Naive thymus-derived CD4-positive, alpha-beta T cell (primary cell): ENCODE measurements at regions of chr9 and their contacts with region 1.

Region 1: DNA sequence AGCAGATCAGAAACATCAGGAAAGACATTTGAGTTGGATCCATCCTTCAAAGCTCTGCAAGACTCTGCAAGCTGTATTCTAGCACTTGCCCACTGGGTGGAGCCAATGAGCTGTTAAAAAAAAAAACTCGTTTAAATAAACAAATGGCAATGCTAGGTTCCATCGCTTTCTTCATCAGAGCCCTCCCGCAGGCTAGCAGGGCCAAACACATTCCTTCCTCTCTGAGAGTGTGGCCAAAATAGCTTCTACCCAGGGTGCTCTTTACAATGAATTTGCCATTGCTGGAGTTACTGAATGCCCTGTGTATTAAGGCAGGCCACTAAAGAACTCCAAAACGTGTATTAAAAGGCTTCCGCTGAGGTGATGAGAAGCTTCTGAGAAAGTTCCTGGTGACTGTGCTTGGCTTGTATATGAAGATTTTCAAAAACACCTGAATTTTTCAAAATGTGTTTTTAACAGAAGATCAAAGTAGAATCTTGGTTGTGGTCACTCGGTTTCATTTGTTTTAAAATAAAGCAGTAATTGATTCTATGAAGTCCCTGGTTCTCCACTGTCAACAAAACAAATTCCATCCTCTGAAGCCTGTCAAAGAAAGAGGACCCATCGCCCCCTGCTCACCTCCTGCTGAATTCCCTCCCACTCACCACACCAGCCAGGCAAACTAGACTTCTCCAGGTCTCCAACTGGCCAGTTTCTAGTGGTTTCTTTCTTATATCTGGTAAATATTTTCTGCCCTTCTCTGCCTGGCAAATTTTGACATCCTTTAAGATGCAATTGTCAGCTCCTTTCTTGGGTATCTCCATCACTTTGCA is 36.5 kb upstream of the EQTN start:
- DNase-seq: peak in 7 of 9 donors; percentile 42 to 67 (median 58)
- ATAC-seq: peak; percentile 73
- H3K4me3 ChIP-seq: no peak overlapping the region
- H3K4me3 Mint-ChIP-seq: no peak overlapping the region
- H3K27ac ChIP-seq: no peak overlapping the region
- H3K27ac Mint-ChIP-seq: no peak overlapping the region
- H3K4me1 ChIP-seq: no peaks in the 10 kb centered on the region
- H3K4me1 Mint-ChIP-seq: peaks cover 0 to 12% (median 0%) of the 10 kb centered on the region in 7 donors
- H3K27me3 ChIP-seq: no peaks in the 10 kb centered on the region
- H3K27me3 Mint-ChIP-seq: peaks cover 0 to 4% (median 0%) of the 10 kb centered on the region in 5 donors

Region 2: GRCh38 chr9:26850995-26851394 is 482.5 kb before region 1 on chr9:
- CTCF ChIA-PET with region 1: no interaction called
- POLR2A ChIA-PET with region 1: no interaction called
- intact Hi-C with region 1: no loop called
- DNase-seq: no peak
- ATAC-seq: no peak
- H3K4me3 ChIP-seq: no peak overlapping the region
- H3K4me3 Mint-ChIP-seq: no peak overlapping the region
- H3K27ac ChIP-seq: no peak overlapping the region
- H3K27ac Mint-ChIP-seq: no peak overlapping the region
- H3K4me1 ChIP-seq: no peaks in the 10 kb centered on the region
- H3K4me1 Mint-ChIP-seq: peaks cover 0 to 4% (median 0%) of the 10 kb centered on the region in 7 donors
- H3K27me3 ChIP-seq: no peaks in the 10 kb centered on the region
- H3K27me3 Mint-ChIP-seq: no peaks in the 10 kb centered on the region

Region 3: DNA sequence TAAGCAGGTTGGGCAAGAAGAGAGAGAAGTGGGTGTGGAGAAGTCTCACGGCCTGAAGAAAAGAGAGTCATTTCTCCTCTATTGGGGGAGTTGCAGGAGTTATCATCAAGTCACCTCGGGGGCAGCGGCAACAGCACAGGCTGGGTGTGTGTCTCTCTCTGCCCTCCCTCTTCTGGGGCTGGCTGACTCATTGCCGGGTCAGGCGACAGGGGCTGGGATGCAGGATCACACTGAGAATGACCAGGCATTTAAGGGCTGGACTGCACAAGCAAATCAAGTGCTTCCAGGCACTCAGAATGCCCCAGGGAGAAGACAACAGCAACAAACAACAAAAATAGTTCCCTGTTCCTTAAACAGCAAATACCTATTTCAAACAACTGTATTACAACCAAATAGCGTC is 30.2 kb before region 1 on chr9:
- CTCF ChIA-PET with region 1: no interaction called
- POLR2A ChIA-PET with region 1: no interaction called
- intact Hi-C with region 1: no loop called
- DNase-seq: no peak
- ATAC-seq: no peak
- H3K4me3 ChIP-seq: no peak overlapping the region
- H3K4me3 Mint-ChIP-seq: no peak overlapping the region
- H3K27ac ChIP-seq: no peak overlapping the region
- H3K27ac Mint-ChIP-seq: no peak overlapping the region
- H3K4me1 ChIP-seq: no peaks in the 10 kb centered on the region
- H3K4me1 Mint-ChIP-seq: peaks cover 0 to 1% (median 0%) of the 10 kb centered on the region in 7 donors
- H3K27me3 ChIP-seq: no peaks in the 10 kb centered on the region
- H3K27me3 Mint-ChIP-seq: peaks cover 0 to 11% (median 8%) of the 10 kb centered on the region in 5 donors

Region 4: GRCh38 chr9:27365707-27366376 is 32.4 kb after region 1 on chr9:
- CTCF ChIA-PET with region 1: no interaction called
- POLR2A ChIA-PET with region 1: no interaction called
- intact Hi-C with region 1: loop called in 1 of 2 experiments (anchors 2 kb)
- DNase-seq: peak in 7 of 9 donors; percentile 2 to 55 (median 11)
- ATAC-seq: peak; percentile 49
- H3K4me3 ChIP-seq: no peak overlapping the region
- H3K4me3 Mint-ChIP-seq: peak overlapping the region in 4 of 10 donors; percentile 28 to 81 (median 32)
- H3K27ac ChIP-seq: no peak overlapping the region
- H3K27ac Mint-ChIP-seq: peak overlapping the region in 2 of 9 donors; percentile 7 to 85
- H3K4me1 ChIP-seq: peaks cover 0 to 18% of the 10 kb centered on the region in 2 donors
- H3K4me1 Mint-ChIP-seq: peaks cover 20 to 50% (median 26%) of the 10 kb centered on the region in 7 donors
- H3K27me3 ChIP-seq: peaks cover 0 to 3% of the 10 kb centered on the region in 2 donors
- H3K27me3 Mint-ChIP-seq: peaks cover 0 to 8% (median 7%) of the 10 kb centered on the region in 5 donors

Region 5: DNA sequence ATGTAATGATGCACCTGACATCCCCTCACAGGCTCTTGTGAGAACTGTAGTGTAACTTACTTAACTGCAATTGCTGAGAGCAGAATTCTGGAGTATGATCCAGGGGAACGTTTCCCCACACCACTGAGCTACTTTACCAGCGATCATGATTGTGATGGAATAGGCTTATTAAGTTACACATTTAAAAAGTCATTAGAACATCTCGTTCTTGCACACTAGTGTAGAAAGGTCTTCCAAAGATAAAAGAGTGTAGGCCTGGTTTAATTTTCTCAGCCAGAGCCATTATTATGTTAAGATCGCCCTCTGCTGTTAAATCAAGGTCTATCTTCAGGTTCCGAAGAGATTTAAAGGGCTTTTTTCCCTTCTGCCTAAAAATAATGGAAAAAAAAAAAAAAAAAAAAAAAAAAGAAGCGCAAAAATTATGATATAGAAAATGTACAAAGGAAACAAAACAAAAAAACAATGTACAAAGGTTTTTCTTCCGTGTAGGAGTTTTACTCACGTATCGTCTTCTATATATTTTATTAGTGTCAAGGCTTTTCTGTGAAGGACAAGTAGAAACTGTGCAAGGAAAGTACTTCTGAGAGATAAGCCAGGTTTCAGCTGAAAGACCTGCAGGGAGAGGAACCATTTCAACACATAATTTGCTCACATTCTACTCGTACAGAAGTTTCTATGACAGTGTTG is 214.8 kb after region 1 on chr9:
- CTCF ChIA-PET with region 1: no interaction called
- POLR2A ChIA-PET with region 1: no interaction called
- intact Hi-C with region 1: loop called (anchors 1 kb)
- DNase-seq: peak in 1 of 9 donors; percentile 21
- ATAC-seq: no peak
- H3K4me3 ChIP-seq: no peak overlapping the region
- H3K4me3 Mint-ChIP-seq: no peak overlapping the region
- H3K27ac ChIP-seq: no peak overlapping the region
- H3K27ac Mint-ChIP-seq: no peak overlapping the region
- H3K4me1 ChIP-seq: no peaks in the 10 kb centered on the region
- H3K4me1 Mint-ChIP-seq: peaks cover 0 to 2% (median 0%) of the 10 kb centered on the region in 7 donors
- H3K27me3 ChIP-seq: no peaks in the 10 kb centered on the region
- H3K27me3 Mint-ChIP-seq: no peaks in the 10 kb centered on the region

Region 6: DNA sequence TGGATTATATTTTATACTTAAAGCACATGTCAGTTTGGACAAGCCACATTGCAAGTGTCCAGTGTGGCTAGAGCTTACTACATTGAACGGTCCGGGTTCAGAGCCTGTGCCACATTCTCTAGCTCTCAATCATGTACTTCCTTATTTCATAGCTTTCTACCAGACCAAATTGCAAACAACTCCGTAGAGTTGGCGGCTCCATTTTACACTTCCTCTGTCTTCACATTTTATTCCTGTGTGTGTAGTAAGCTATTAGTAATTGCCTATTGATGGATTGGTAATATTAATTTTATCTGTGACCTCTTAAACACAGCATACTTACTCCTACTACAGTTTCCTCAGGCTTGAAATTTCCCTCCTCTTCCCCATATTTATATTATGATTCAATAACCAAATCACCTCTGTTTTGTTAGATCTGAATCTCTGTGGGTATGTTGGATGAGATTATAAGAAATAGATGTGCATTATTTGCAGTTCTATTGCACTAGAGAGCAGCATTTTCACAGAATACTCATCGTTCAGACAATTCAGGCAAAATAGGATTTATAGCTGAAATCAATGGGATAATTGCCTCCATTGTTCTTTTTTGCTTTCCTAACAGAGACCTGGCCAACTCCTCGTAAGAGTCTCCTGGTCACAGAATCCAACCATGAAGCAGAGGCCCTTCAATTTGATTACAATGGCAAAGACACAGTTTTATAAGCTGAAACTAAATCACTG is 268.9 kb after region 1 on chr9:
- CTCF ChIA-PET with region 1: no interaction called
- POLR2A ChIA-PET with region 1: no interaction called
- intact Hi-C with region 1: loop called in 1 of 2 experiments (anchors 2 kb)
- DNase-seq: no peak
- ATAC-seq: no peak
- H3K4me3 ChIP-seq: no peak overlapping the region
- H3K4me3 Mint-ChIP-seq: no peak overlapping the region
- H3K27ac ChIP-seq: no peak overlapping the region
- H3K27ac Mint-ChIP-seq: no peak overlapping the region
- H3K4me1 ChIP-seq: no peaks in the 10 kb centered on the region
- H3K4me1 Mint-ChIP-seq: peaks cover 0 to 1% (median 0%) of the 10 kb centered on the region in 7 donors
- H3K27me3 ChIP-seq: no peaks in the 10 kb centered on the region
- H3K27me3 Mint-ChIP-seq: peaks cover 0 to 9% (median 4%) of the 10 kb centered on the region in 5 donors

Region 7: DNA sequence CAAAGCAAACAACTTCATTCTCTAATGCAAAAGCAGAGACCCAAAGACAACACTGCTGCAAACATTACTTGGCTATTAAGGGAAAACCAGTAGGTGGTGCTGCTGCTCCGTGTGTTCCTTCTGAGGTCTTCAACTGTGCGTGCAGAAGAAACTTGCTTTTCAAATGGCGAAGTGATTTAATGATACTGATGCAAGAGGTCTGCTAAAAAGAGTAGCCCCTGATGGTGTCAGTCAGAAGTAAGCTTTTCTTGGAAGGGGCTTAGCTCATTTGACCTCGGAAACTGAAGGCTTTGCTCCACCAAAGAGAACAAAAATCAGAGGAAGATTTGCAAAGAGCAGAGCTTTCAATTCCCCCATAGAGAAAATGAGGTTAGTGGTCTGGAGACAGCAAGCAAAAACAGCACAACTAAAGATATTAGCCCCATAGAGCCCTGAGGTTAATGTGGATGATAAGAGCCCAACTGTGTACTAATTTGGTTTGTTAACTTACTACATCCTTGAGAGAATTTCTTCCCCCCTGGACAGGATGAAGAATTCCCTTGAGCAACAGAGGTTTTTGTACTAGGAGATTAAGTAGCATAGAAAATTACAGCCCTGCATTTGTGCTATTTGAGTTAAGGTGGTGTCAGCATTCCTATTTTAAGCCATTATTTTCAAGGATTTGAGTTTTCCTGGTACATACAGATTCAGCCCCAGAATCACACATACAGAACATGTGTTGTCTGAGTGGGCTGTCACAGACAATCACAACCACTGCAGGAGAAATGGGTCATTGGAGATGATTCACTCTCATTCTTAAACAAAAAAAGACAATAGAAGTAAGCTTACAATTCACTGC is 393.0 kb after region 1 on chr9:
- CTCF ChIA-PET with region 1: no interaction called
- POLR2A ChIA-PET with region 1: no interaction called
- intact Hi-C with region 1: loop called in 1 of 2 experiments (anchors 10 kb)
- DNase-seq: peak in 7 of 9 donors; percentile 10 to 50 (median 40)
- ATAC-seq: peak; percentile 73
- H3K4me3 ChIP-seq: no peak overlapping the region
- H3K4me3 Mint-ChIP-seq: peak overlapping the region in 1 of 10 donors; percentile 6
- H3K27ac ChIP-seq: no peak overlapping the region
- H3K27ac Mint-ChIP-seq: no peak overlapping the region
- H3K4me1 ChIP-seq: no peaks in the 10 kb centered on the region
- H3K4me1 Mint-ChIP-seq: peaks cover 0 to 5% (median 0%) of the 10 kb centered on the region in 7 donors
- H3K27me3 ChIP-seq: no peaks in the 10 kb centered on the region
- H3K27me3 Mint-ChIP-seq: peaks cover 4 to 20% (median 12%) of the 10 kb centered on the region in 5 donors

Region 8: DNA sequence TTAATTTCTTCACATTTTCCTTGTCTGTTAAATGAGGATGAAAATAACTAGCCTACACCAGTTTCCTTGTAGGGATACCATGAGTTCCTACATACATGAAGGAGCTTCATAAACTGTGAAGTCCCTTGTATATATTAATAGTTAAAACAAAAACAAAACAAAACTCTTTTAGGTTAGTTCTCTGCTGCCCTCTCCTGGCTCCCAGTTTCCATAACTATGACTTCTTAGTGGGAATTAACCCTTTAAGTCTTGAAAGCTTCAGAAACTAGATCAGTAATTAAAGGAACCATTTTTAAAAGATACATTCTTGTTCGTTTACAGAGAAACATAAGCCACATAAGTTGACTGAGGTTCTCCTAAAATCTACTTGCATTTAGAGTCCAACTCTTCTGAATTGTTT is 739.8 kb after region 1 on chr9:
- CTCF ChIA-PET with region 1: no interaction called
- POLR2A ChIA-PET with region 1: no interaction called
- intact Hi-C with region 1: loop called in 1 of 2 experiments (anchors 2 kb)
- DNase-seq: no peak
- ATAC-seq: no peak
- H3K4me3 ChIP-seq: no peak overlapping the region
- H3K4me3 Mint-ChIP-seq: no peak overlapping the region
- H3K27ac ChIP-seq: no peak overlapping the region
- H3K27ac Mint-ChIP-seq: no peak overlapping the region
- H3K4me1 ChIP-seq: no peaks in the 10 kb centered on the region
- H3K4me1 Mint-ChIP-seq: no peaks in the 10 kb centered on the region
- H3K27me3 ChIP-seq: no peaks in the 10 kb centered on the region
- H3K27me3 Mint-ChIP-seq: no peaks in the 10 kb centered on the region